ENCODE measurements at regions of chr4 and their contacts with region 1.

Region 1: DNA sequence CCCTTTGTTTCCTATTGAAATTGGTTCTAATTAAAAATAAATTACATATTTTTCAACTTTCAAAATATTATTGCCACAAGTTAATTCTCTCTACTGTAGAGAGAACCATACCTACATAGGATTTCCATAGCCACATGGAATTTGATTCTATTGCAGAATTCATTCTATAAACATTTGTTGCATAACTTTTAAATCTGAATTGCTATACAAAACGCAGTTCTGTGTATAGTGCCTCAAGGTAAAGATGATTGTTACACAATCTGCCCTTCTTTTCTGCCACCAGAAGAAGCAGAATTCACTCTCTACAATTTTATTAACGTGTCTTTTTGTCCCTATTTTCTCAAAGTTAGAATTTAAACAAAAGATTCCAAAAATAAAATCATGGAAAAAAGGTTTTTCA is 673.4 kb downstream of the C4orf33 start:
- DNase-seq: no peak
- H3K4me3 Mint-ChIP-seq: no peak overlapping the region
- H3K27ac Mint-ChIP-seq: no peak overlapping the region
- H3K4me1 Mint-ChIP-seq: no peaks in the 10 kb centered on the region
- H3K27me3 Mint-ChIP-seq: no peaks in the 10 kb centered on the region

Region 2: DNA sequence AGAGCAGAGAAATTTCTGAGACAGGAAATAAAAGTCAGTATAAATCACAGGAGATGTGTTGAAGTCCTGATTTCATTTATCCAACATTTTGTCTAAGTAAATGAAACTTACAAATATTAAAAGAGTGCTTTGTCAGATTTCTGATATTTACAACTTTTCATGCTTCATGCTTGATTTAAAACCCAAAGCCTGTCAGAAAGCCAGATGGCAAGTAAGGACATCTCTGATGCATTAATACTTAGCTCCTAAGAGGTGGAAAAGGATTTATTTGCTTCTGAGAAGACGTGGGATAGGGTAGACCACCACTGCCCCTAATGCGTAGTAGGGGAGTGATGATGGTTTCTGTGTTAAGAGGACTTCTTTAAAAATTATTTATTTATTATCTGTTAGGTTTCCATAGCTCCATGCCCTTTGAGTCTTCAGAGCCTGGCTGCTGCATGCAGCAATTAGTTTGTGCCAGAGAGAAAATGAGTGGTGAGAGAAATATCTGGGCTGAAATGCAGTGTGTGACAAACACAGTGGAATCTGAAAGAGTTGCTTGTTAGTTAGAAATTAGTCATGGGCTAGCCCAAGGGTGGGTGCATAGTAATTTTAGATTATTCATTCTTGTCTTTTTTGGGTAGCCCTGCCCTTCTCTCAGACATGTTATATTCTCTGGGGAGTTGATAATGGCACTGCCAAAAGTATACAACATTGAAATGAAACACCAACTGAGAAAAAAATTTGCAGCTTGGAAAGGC is 339.6 kb before region 1 on chr4:
- intact Hi-C with region 1: no loop called
- DNase-seq: no peak
- H3K4me3 Mint-ChIP-seq: no peak overlapping the region
- H3K27ac Mint-ChIP-seq: no peak overlapping the region
- H3K4me1 Mint-ChIP-seq: no peaks in the 10 kb centered on the region
- H3K27me3 Mint-ChIP-seq: no peaks in the 10 kb centered on the region

Region 3: GRCh38 chr4:130563185-130563888 is 794.0 kb after region 1 on chr4:
- intact Hi-C with region 1: loop called (anchors 5 kb)
- DNase-seq: no peak
- H3K4me3 Mint-ChIP-seq: no peak overlapping the region
- H3K27ac Mint-ChIP-seq: no peak overlapping the region
- H3K4me1 Mint-ChIP-seq: no peaks in the 10 kb centered on the region
- H3K27me3 Mint-ChIP-seq: no peaks in the 10 kb centered on the region

Measured in activated T-helper 1 cell treated with anti-CD3 and anti-CD28 coated beads, Interleukin-12 subunit alpha, Interleukin-12 subunit beta, Interleukin-2, Interleukin-4 antibody, amounts not matched to agents 30 ng/mL and 10 ng/mL and 1 ng/mL, durations not matched to agents 14 hours and 24 hours and 36 hours (primary cell).